GM12878 (cell line): ENCODE measurements at regions of chr9 and their contacts with region 1.

Region 1: GRCh38 chr9:80699511-80699998 is 989.8 kb downstream of the TLE1 start:
- DNase-seq: no peak
- ATAC-seq: no peak
- H3K4me3 ChIP-seq: no peak overlapping the region
- H3K27ac ChIP-seq: no peak overlapping the region
- H3K4me1 ChIP-seq: no peaks in the 10 kb centered on the region
- H3K27me3 ChIP-seq: no peaks in the 10 kb centered on the region
- CTCF ChIP-seq: no peak
- EP300 ChIP-seq: no peak
- POLR2A ChIP-seq: no peak
- RAD21 ChIP-seq: no peak

Region 2: GRCh38 chr9:80673496-80673895 is 26.1 kb before region 1 on chr9:
- CTCF ChIA-PET with region 1: no interaction called
- POLR2A ChIA-PET with region 1: no interaction called
- RAD21 ChIA-PET with region 1: no interaction called
- SMC1A ChIA-PET with region 1: no interaction called
- in situ Hi-C with region 1: no loop called
- intact Hi-C with region 1: loop called (anchors 1 kb)
- DNase-seq: no peak
- ATAC-seq: no peak
- H3K4me3 ChIP-seq: no peak overlapping the region
- H3K27ac ChIP-seq: no peak overlapping the region
- H3K4me1 ChIP-seq: no peaks in the 10 kb centered on the region
- H3K27me3 ChIP-seq: no peaks in the 10 kb centered on the region
- CTCF ChIP-seq: no peak
- EP300 ChIP-seq: no peak
- POLR2A ChIP-seq: no peak
- RAD21 ChIP-seq: no peak